Activated T-helper 2 cell treated with anti-CD3 and anti-CD28 coated beads, Interferon-gamma antibody, Interleukin-2, Interleukin-4, amounts not matched to agents 10 μg/mL and 5 μg/mL and 100 μg/mL, durations not matched to agents 14 hours and 24 hours and 36 hours (primary cell): ENCODE measurements at regions of chr5 and their contacts with region 1.

Region 1: GRCh38 chr5:122774861-122775549 is at the start of gene SNX2:
- DNase-seq: peak; percentile 78
- H3K4me3 Mint-ChIP-seq: peak within 1 kb of the TSS; percentile 91
- H3K27ac Mint-ChIP-seq: peak within 1 kb of the TSS; percentile 68
- H3K4me1 Mint-ChIP-seq: peaks cover 21% of the 10 kb centered on the region
- H3K27me3 Mint-ChIP-seq: peaks cover 13% of the 10 kb centered on the region
- total RNA-seq, gene SNX2: 31.5 and 36.4 TPM in 2 replicates

Region 2: GRCh38 chr5:122704243-122705036 is 70.6 kb before region 1 on chr5:
- intact Hi-C with region 1: loop called (anchors 5 kb)
- DNase-seq: no peak
- H3K4me3 Mint-ChIP-seq: no peak overlapping the region
- H3K27ac Mint-ChIP-seq: no peak overlapping the region
- H3K4me1 Mint-ChIP-seq: peaks cover 5% of the 10 kb centered on the region
- H3K27me3 Mint-ChIP-seq: peaks cover 2% of the 10 kb centered on the region

Region 3: GRCh38 chr5:122756263-122756911 is 18.6 kb before region 1 on chr5:
- intact Hi-C with region 1: loop called (anchors 2 kb)
- DNase-seq: no peak
- H3K4me3 Mint-ChIP-seq: no peak overlapping the region
- H3K27ac Mint-ChIP-seq: no peak overlapping the region
- H3K4me1 Mint-ChIP-seq: peaks cover 22% of the 10 kb centered on the region
- H3K27me3 Mint-ChIP-seq: no peaks in the 10 kb centered on the region

Region 4: GRCh38 chr5:122810405-122810804 is 35.4 kb after region 1 on chr5:
- intact Hi-C with region 1: loop called (anchors 5 kb)
- DNase-seq: no peak
- H3K4me3 Mint-ChIP-seq: no peak overlapping the region
- H3K27ac Mint-ChIP-seq: no peak overlapping the region
- H3K4me1 Mint-ChIP-seq: no peaks in the 10 kb centered on the region
- H3K27me3 Mint-ChIP-seq: no peaks in the 10 kb centered on the region

Region 5: DNA sequence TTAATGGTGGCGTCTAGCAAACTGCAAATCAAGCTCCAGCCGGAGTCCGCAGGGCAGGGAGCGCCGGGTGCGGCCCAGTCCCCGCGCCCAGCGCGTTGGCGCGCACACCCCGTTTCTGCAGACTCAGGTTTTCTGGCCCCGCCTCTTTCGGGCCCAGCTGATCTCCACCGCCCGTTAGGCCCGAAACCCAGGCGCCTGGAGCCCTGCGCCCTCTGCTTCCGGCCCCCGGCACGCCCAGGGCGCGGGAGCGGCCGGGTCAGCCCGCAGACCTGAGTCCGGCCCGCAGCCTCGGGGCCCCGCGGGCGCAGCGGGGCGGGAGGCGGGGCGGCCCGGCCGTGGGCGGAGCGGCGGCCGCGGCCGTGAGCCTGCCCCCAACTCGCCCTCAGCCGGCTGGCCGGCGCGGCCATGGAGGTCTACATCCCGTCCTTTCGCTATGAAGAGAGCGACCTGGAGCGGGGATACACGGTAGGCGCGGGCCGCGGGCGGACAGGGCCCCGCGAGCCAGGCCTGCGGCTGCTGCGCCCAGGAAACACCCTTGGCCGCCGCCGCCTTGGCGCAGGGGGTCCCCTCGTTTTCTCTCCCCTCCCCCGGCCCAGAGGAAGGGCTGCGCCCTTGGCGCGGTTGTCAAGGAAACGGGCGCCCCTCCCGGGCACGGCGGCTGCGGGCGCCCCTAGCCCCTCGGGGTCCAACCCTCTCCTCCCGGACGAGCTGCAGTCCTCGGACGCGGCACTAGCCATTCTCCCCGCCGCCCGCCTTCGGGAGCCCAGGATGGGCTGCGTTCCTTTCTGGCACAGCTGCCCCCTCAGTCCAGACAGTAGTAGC is 70.4 kb after region 1 on chr5 and contains the start of gene SNX24:
- intact Hi-C with region 1: loop called (anchors 2 kb)
- DNase-seq: peak; percentile 64
- H3K4me3 Mint-ChIP-seq: peak within 1 kb of the TSS; percentile 77
- H3K27ac Mint-ChIP-seq: no peak within 1 kb of the TSS
- H3K4me1 Mint-ChIP-seq: peaks cover 20% of the 10 kb centered on the region
- H3K27me3 Mint-ChIP-seq: peaks cover 22% of the 10 kb centered on the region
- total RNA-seq, gene SNX24: 1.3 and 1.7 TPM in 2 replicates

Region 6: DNA sequence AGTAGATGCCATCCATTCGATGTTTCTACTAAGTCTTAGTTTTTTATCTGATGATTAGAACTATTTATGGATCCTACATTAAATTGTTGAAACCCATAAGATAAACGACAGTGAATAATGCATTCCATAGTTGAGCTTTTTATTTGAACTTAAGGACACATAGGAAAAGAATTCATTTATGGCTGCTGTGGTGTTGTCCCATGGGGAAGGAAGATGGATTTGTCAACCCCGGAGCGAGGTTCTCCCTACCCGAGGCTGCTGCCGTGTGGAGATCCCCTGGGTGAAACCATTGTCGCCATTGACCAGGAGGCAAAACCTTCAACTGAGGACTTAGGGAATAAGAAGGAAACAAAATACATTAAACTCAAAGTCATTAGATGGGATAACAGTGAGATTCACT is 460.8 kb after region 1 on chr5:
- intact Hi-C with region 1: no loop called
- DNase-seq: no peak
- H3K4me3 Mint-ChIP-seq: no peak overlapping the region
- H3K27ac Mint-ChIP-seq: no peak overlapping the region
- H3K4me1 Mint-ChIP-seq: no peaks in the 10 kb centered on the region
- H3K27me3 Mint-ChIP-seq: no peaks in the 10 kb centered on the region